ENCODE measurements at regions of chr11 and their contacts with region 1.

Region 1: GRCh38 chr11:34492806-34493414 is 20.7 kb downstream of the ELF5 start:
- DNase-seq: peak; percentile 53
- H3K4me3 ChIP-seq: no peak overlapping the region
- H3K27ac ChIP-seq: no peak overlapping the region
- H3K4me1 ChIP-seq: no peaks in the 10 kb centered on the region
- H3K27me3 ChIP-seq: no peaks in the 10 kb centered on the region
- CTCF ChIP-seq: peak; percentile 59 to 67 (median 64)
- EP300 ChIP-seq: no peak
- POLR2A ChIP-seq: no peak

Region 2: DNA sequence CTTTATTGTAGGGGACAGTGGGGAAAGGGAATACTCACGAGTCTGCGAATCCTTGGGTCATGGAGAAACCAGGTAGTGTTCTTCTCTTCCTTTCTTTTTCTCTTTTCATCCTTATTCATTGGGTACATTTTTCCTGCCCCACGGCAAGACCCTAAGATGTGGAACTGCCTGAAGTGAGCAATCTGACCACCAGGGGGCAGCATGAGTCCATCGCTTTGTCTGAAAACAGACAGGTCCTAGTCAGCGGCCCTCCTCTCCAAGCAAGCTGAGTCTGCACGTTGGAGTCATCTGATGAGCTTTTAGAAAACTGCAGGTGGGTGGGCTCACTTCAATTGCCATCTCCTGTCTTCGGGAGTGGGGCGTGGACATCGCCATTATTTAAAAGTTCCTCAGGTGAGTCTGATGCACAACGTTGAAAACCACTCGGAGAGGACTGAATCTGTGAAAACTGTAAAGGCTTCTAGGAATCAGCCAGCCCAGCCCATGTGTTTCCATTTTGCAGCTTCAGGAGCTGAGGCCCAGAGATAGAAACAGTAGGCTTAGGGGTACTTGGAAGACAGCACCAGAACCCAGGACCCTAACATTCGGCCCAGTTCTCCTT is 684.6 kb before region 1 on chr11:
- in situ Hi-C with region 1: loop called in 1 of 4 experiments (anchors 25 kb)
- intact Hi-C with region 1: no loop called
- DNase-seq: peak; percentile 81
- H3K4me3 ChIP-seq: no peak overlapping the region
- H3K27ac ChIP-seq: no peak overlapping the region
- H3K4me1 ChIP-seq: no peaks in the 10 kb centered on the region
- H3K27me3 ChIP-seq: peaks cover 19% of the 10 kb centered on the region
- CTCF ChIP-seq: peak; percentile 86 to 94 (median 90)
- EP300 ChIP-seq: no peak
- POLR2A ChIP-seq: no peak

Region 3: GRCh38 chr11:33829433-33830141 is 663.3 kb before region 1 on chr11:
- in situ Hi-C with region 1: loop called in 2 of 4 experiments (anchors 25 kb)
- intact Hi-C with region 1: no loop called
- DNase-seq: peak; percentile 55
- H3K4me3 ChIP-seq: peak overlapping the region in 3 of 4 donors; percentile 15 to 47 (median 32)
- H3K27ac ChIP-seq: no peak overlapping the region
- H3K4me1 ChIP-seq: peaks cover 7 to 10% (median 8%) of the 10 kb centered on the region in 4 donors
- H3K27me3 ChIP-seq: peaks cover 69% of the 10 kb centered on the region
- CTCF ChIP-seq: peak; percentile 68 to 73 (median 69)
- EP300 ChIP-seq: no peak
- POLR2A ChIP-seq: no peak

Region 4: DNA sequence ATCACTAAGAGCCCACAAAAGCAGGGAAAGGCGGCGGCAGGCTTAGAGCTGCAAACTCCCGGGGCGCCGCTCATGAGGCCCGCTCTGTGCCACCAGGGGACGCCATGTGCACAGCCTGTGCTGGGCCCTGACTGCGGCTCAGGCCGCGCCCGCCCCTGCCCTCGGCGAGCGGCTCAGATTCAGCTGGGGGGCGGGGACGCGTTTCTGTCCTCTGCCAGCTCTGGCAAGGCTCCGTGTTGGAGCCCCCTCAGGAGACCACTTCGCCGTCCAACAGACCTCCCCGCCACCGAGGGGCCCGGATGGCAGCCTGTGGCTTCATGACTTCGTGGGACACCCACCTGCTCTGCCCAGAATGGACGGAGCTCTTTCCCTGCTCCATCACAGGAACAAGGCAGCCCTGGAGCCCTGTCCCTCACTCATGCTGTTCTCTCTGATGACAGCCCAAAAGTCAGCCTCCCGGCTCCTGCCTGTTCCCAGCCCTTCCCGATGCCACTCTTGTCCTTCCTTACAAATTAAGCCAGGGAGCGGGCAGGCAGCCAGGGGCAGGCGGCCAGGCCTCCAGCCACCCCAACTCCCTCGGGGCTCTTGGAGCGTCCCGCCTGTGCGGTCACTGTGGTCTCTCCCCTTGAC is 318.4 kb before region 1 on chr11:
- in situ Hi-C with region 1: loop called in 3 of 4 experiments (anchors 25 kb)
- intact Hi-C with region 1: no loop called
- DNase-seq: peak; percentile 86
- H3K4me3 ChIP-seq: peak overlapping the region in 2 of 4 donors; percentile 21 to 40
- H3K27ac ChIP-seq: no peak overlapping the region
- H3K4me1 ChIP-seq: peaks cover 0 to 12% (median 6%) of the 10 kb centered on the region in 4 donors
- H3K27me3 ChIP-seq: no peaks in the 10 kb centered on the region
- CTCF ChIP-seq: peak; percentile 94 to 97 (median 96)
- EP300 ChIP-seq: no peak
- POLR2A ChIP-seq: no peak

Region 5: DNA sequence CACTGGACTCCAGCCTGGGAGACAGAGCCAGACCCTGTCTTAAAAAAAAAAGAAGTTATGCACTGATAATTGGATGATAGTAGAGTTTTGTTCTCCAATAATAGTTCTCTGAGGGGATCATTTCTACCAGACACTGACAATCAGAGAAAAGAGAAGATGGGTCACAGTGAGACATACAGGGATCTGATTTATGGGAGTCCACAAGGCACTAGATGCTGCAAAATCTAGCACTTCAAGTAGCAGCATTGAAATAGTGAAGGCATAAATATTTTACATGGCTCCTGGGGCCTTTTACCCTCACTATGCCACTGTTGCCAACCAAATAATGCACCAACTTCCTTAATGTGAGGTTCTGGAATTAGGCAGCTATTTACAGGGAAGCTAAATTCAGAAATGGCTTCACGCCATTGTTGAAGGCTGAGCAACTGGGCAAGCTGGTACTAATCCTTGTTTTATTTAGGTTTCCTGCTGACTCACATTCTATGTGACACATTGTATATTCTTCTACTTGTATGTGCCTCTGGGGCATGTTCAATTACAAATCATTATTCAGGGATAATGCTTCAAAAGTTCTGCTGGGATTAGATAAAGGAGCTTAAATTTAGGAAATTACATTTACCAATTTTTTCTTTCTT is 96.9 kb before region 1 on chr11:
- in situ Hi-C with region 1: loop called in 1 of 4 experiments (anchors 25 kb)
- intact Hi-C with region 1: no loop called
- DNase-seq: no peak
- H3K4me3 ChIP-seq: no peak overlapping the region
- H3K27ac ChIP-seq: no peak overlapping the region
- H3K4me1 ChIP-seq: no peaks in the 10 kb centered on the region
- H3K27me3 ChIP-seq: no peaks in the 10 kb centered on the region
- CTCF ChIP-seq: no peak
- EP300 ChIP-seq: no peak
- POLR2A ChIP-seq: no peak